ENCODE measurements at regions of chr1 and their contacts with region 1.

Region 1: DNA sequence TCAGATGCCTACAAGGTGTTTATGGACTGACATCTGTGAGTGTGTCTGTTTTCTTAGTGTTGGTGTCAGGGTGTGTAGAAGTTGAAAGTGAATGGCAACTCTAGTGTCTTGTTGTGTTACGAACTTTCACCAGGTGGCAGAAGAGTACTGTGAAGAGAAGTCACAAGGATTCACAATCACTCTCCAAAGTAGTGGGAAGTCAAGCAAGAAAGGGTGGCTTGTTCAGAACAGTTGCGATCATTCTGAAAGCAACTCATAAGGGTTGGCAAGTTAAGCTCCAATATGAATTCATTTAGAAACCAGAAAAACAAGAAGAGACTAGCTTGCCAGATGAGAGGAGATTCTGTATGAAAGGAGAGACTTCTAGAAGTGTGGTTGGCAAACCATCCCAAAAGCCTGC is 86.1 kb downstream of the FASLG start:
- DNase-seq: no peak
- H3K4me3 ChIP-seq: no peak overlapping the region
- H3K27ac ChIP-seq: peak overlapping the region in 5 of 8 donors; percentile 77 to 87 (median 80)
- H3K4me1 ChIP-seq: peaks cover 23 to 39% (median 29%) of the 10 kb centered on the region in 6 donors
- H3K27me3 ChIP-seq: no peaks in the 10 kb centered on the region
- CTCF ChIP-seq: peak; percentile 30 to 91 (median 75)
- POLR2A ChIP-seq: no peak

Region 2: GRCh38 chr1:173202430-173203145 is 457.6 kb after region 1 on chr1:
- intact Hi-C with region 1: loop called (anchors 10 kb)
- DNase-seq: no peak
- H3K4me3 ChIP-seq: no peak overlapping the region
- H3K27ac ChIP-seq: no peak overlapping the region
- H3K4me1 ChIP-seq: peaks cover 17 to 72% (median 35%) of the 10 kb centered on the region in 6 donors
- H3K27me3 ChIP-seq: no peaks in the 10 kb centered on the region
- CTCF ChIP-seq: peak in 9 of 11 experiments; percentile 22 to 64 (median 56)
- POLR2A ChIP-seq: no peak

Region 3: GRCh38 chr1:173429471-173430402 is 684.7 kb after region 1 on chr1:
- intact Hi-C with region 1: loop called (anchors 10 kb)
- DNase-seq: peak; percentile 89
- H3K4me3 ChIP-seq: peak overlapping the region in 3 of 8 donors; percentile 5 to 44 (median 17)
- H3K27ac ChIP-seq: peak overlapping the region; percentile 65 to 86 (median 82)
- H3K4me1 ChIP-seq: peaks cover 22 to 34% (median 27%) of the 10 kb centered on the region in 6 donors
- H3K27me3 ChIP-seq: no peaks in the 10 kb centered on the region
- CTCF ChIP-seq: peak; percentile 45 to 78 (median 74)
- POLR2A ChIP-seq: no peak

Region 4: GRCh38 chr1:173824331-173825081 is 1079.5 kb after region 1 on chr1 and contains the starts of genes CENPL and DARS2:
- intact Hi-C with region 1: loop called (anchors 5 kb)
- DNase-seq: peak; percentile 96
- H3K4me3 ChIP-seq: peak within 1 kb of the TSS; percentile 67 to 99 (median 76)
- H3K27ac ChIP-seq: peak within 1 kb of the TSS; percentile 92 to 97 (median 94)
- H3K4me1 ChIP-seq: peaks cover 11 to 75% (median 48%) of the 10 kb centered on the region in 6 donors
- H3K27me3 ChIP-seq: no peaks in the 10 kb centered on the region
- CTCF ChIP-seq: peak in 1 of 11 experiments; percentile 15
- POLR2A ChIP-seq: peak in 1 of 3 donors; percentile 25
- total RNA-seq, gene CENPL: 4.7 to 22.2 (median 7.9) TPM
- total RNA-seq, gene DARS2: 12.6 to 23.3 (median 18.2) TPM

Measured in spleen (tissue), 13 donors.